ENCODE measurements at regions of chr15 and their contacts with region 1.

Region 1: DNA sequence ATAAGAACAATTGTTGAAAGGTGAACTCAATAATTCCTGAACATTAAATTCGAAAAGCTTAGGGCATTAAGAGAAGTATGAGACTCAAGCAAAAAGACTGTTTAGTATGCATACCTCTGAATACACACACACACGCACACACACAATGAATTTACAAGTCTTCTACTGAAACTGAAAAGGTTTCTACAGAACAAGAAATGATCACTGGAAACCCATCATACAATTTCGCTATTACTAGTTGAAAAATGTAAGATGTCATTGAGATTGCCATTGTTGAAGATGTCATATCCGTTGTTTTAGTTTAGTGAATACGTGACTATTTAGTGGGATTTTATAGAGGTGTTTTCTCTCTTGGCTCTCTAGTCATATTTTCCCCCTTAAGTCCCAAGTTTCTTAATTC is 106.8 kb downstream of the FOXB1 start:
- DNase-seq: no peak
- H3K4me3 Mint-ChIP-seq: no peak overlapping the region
- H3K27ac Mint-ChIP-seq: peak overlapping the region; percentile 80
- H3K4me1 Mint-ChIP-seq: peaks cover 37% of the 10 kb centered on the region
- H3K27me3 Mint-ChIP-seq: peaks cover 8% of the 10 kb centered on the region

Region 2: DNA sequence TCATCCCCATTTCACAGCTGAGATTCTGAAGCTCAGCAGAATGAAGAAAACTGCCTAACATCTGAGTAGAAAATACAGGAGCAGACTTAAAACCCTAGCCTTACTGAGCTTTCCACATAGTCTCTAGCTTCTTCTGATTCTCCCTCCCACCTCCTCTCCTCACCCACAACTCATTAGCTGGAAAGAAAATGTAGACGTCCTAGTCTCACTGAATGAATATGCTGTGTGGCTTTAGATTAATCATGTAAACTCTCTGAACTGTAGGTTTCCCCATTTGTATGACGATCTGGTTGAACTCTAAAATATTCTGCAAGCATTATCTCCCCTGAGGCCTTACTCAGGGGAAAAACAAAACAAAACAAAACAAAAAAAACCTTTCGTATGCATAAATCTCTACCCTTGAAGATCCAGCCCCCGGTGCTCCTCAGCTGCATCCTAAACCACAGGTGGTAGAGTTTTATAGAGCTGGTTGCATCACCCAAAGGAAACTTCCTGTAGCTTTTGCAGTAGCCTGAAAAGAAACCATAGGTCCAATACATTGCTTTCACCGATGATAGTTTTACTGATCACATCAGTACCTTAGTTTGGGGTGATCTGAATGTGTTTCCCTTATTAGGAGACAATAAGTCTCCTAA is 66.2 kb before region 1 on chr15:
- CTCF ChIA-PET with region 1: no interaction called
- POLR2A ChIA-PET with region 1: no interaction called
- intact Hi-C with region 1: loop called (anchors 1 kb)
- DNase-seq: peak; percentile 57
- H3K4me3 Mint-ChIP-seq: peak overlapping the region; percentile 46
- H3K27ac Mint-ChIP-seq: peak overlapping the region; percentile 75
- H3K4me1 Mint-ChIP-seq: peaks cover 19% of the 10 kb centered on the region
- H3K27me3 Mint-ChIP-seq: peaks cover 4% of the 10 kb centered on the region

Region 3: GRCh38 chr15:60077581-60078359 is 33.1 kb before region 1 on chr15:
- CTCF ChIA-PET with region 1: no interaction called
- POLR2A ChIA-PET with region 1: interaction called, 3 read pairs
- intact Hi-C with region 1: loop called (anchors 1 kb)
- DNase-seq: peak; percentile 70
- H3K4me3 Mint-ChIP-seq: no peak overlapping the region
- H3K27ac Mint-ChIP-seq: peak overlapping the region; percentile 62
- H3K4me1 Mint-ChIP-seq: peaks cover 52% of the 10 kb centered on the region
- H3K27me3 Mint-ChIP-seq: peaks cover 13% of the 10 kb centered on the region

Region 4: DNA sequence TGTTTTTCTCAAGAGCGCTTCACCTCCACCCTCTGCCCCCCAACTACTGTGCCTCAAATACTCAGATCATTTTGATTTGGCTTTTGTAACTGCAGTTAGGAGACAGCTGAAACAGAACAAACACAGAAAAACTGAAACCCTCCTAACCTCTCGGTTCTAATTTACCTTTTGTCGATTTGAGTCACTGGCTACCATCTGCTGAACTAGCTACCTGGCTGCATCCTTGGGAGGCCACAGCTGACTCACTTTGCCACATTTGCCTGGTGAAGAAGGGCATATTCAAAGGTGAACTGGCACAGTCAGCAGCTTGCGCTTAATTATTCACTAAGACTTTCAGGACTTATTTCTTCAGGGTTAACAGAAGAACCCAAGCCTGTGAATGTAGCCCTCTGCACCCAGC is 10.9 kb after region 1 on chr15:
- CTCF ChIA-PET with region 1: no interaction called
- POLR2A ChIA-PET with region 1: no interaction called
- intact Hi-C with region 1: loop called (anchors 1 kb)
- DNase-seq: peak; percentile 84
- H3K4me3 Mint-ChIP-seq: peak overlapping the region; percentile 40
- H3K27ac Mint-ChIP-seq: peak overlapping the region; percentile 60
- H3K4me1 Mint-ChIP-seq: peaks cover 58% of the 10 kb centered on the region
- H3K27me3 Mint-ChIP-seq: peaks cover 1% of the 10 kb centered on the region

Region 5: DNA sequence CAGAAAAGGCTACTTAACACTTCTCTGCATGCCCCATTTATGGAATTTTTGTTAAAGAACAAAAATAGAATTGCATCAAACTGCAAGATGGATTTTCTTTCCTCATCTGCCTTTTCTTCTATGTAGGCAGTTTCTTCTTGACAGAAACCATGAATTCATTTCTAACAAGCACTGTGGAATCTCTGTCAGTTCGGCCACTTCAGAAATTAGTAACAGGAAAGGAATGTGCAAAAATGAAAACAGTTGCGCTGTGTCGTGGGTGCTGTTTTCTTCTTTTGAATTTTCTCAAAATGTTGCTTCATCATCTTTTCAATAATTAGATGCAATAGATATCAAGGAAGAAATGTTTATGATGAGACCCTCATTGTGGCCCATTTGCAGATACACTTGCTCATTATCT is 44.8 kb after region 1 on chr15:
- CTCF ChIA-PET with region 1: no interaction called
- POLR2A ChIA-PET with region 1: no interaction called
- intact Hi-C with region 1: loop called (anchors 1 kb)
- DNase-seq: peak; percentile 42
- H3K4me3 Mint-ChIP-seq: no peak overlapping the region
- H3K27ac Mint-ChIP-seq: no peak overlapping the region
- H3K4me1 Mint-ChIP-seq: peaks cover 21% of the 10 kb centered on the region
- H3K27me3 Mint-ChIP-seq: peaks cover 21% of the 10 kb centered on the region